ENCODE measurements at regions of chr19 and their contacts with region 1.

Region 1: DNA sequence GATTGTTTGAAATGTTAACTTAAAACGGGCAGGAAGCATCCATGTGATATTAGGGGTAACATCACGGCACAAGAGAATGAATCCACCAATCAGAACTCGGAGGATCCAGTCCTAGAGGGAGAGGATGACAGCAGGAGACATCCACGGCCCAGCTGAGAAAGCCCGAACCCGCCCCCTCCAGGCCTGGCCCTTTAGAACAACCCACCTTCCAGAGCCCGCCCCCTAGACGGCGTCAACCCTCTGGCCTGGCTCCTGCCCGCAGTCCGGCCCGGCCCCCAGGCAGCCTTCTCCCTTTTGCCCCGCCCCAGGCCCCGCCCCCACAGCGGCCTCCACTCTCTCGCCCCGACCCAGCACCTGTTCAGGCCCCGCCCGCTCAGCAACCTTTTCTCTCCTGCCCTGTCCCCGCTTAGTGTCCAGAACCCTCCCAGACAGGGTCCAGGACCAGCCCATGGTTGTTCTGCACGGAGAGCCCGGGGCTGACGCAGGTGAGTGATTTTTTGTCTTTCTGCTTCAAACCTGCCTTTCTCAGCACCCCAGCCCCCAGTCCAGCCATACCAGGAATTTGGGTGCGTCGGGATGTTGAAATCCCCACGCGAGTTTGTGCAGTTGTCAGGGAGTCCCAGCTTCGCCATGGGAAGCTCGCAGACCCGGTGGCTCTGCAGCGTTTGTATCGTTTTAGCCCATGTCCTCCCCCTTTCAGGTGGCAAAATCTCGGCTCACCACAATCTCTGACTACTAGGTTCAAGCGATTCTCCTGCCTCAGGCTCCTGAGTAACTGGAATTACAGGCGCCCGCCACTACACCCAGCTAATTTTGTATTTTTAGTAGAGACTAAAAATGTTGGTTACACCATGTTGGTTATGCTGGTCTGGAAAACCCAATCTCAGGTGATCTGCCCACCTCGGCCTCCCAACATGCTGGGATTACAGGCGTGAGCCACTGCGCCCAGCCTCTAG is 16.1 kb downstream of the ZNF816 start:
- DNase-seq: no peak

Region 2: DNA sequence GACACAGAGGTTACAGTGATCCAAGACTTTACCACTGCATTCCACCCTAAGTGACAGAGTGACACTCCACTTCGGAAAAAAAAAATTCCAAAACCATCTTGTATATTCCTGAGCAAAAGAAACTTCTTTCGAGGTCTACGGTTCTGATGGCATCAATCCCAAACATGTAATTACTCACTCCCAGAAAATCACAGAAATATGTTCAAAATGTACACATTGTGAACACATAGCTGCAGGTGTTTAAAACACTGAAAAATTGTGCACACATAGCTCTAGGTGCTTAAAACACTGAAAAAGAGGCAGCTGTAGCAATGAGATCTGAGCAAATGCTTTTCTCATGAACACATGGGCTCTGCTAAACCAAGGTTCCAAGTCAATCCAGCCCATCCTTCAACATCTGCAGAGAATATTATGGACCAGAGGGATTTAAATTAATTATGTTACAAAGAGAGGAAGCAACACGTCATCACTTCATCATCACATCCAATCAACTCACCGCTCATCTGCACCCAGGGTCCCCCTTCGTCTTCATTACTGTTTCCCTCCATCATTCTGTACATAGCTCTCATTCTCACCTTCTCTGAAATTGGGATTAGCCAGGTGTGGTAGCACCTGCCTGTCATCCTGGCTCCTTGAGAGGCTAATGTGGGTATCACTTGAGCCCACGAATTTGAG is 75.0 kb before region 1 on chr19:
- intact Hi-C with region 1: loop called in 1 of 2 experiments (anchors 2 kb)
- DNase-seq: no peak

Region 3: DNA sequence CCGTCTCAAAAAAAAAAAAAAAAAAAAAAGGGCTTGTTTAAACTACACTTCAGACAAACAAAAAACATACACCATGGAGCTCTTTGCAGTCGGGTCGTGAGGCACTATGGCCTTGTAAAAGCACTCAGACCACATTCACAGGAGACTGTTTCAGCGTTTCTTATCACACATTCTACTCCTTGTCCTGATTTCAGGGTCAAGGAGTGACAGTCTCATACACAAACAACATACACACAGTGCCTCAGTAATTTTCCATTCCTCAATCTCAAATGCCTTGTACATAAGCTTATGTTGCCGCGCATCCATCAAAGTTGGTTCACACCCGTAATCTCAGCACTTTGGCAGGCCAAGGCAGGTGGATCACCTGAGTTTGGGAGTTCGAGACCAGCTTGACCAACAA is 28.1 kb after region 1 on chr19:
- intact Hi-C with region 1: loop called in 1 of 2 experiments (anchors 1 kb)
- DNase-seq: no peak

Region 4: DNA sequence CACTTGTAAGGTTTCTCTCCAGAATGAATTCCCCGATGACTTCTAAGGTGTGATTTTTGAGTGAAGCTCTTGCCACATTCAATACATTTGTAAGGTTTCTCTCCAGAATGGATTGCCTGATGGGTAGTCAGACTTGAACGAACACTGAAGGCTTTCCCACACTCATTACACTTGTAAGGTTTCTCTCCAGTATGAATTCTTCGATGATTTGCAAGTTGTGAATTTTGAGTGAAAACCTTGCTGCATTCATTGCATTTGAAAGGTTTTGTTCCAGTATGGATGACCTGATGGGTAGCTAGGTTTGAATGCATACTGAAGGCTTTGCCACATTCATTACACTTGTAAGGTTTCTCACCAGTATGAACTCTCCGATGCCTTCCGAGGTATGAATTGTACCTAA is 122.2 kb after region 1 on chr19:
- intact Hi-C with region 1: no loop called
- DNase-seq: no peak

Measured in posterior vena cava (tissue), 2 donors.